ENCODE measurements at regions of chr5 and their contacts with region 1.

Region 1: DNA sequence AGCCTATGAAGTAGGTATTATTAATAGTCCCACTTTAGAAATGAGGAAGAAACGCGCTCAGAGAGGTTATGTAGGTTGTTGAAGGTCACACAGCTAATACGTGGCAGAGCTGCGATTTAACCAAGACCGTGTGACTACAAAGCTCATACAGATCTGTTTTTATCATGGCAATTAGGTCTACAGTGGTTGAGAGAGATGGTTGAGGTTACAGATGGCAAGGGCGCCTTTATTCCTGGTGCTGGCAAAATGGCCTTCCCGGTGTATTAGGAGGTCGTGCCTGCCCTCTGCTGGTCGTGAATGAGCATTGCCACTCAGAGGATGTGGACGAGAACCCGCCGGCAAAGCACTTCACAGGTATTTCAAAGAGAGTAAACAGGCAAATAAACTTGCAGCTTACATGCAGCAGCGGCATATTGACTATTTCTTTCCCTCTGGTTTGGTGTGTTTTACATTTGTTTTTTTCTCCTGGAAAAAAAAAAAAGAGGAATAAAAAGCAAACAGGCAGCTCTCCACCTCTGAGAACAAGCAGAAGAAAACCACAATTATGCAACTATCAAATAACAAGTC is 65.3 kb upstream of the EGFLAM start:
- DNase-seq: peak; percentile 52
- H3K4me3 ChIP-seq: no peak overlapping the region
- H3K27ac ChIP-seq: no peak overlapping the region
- H3K27me3 ChIP-seq: peaks cover 12% of the 10 kb centered on the region
- CTCF ChIP-seq: peak; percentile 94

Region 2: DNA sequence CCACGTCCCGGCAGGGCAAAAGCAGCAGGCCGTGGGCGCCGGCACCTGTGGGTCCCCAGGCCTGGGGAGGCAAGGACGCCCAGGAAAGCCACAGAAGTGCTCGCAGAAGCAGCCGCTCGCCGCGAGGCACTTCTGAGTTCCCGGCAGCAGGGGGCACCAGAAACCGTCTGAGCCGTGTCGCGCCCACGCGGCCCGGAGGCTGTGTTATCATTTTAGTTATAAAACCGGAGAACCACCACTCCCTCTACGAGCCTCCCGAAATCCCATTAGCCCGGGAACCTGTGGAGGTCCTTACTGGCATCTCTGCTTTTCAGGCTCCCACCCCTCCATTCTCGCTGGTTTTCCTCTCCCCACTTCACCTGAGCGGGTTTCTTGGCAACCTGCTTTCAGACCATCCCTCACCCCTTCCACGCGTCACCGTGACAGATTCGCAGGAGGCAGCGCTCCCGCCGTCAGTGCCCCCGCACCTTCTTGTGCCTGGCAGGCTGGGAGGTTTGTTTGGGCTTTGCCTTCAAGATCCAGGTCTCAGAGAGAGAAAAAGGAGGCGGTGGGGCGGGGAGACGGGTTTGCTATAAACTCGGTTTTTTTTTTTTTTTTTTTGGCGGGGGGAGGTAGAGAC is 355.6 kb before region 1 on chr5:
- in situ Hi-C with region 1: loop called (anchors 25 kb)
- DNase-seq: peak; percentile 70
- H3K4me3 ChIP-seq: peak overlapping the region; percentile 69
- H3K27ac ChIP-seq: no peak overlapping the region
- H3K27me3 ChIP-seq: peaks cover 18% of the 10 kb centered on the region
- CTCF ChIP-seq: peak; percentile 91